OCI-LY7 (cell line): ENCODE measurements at regions of chr1 and their contacts with region 1.

Region 1: DNA sequence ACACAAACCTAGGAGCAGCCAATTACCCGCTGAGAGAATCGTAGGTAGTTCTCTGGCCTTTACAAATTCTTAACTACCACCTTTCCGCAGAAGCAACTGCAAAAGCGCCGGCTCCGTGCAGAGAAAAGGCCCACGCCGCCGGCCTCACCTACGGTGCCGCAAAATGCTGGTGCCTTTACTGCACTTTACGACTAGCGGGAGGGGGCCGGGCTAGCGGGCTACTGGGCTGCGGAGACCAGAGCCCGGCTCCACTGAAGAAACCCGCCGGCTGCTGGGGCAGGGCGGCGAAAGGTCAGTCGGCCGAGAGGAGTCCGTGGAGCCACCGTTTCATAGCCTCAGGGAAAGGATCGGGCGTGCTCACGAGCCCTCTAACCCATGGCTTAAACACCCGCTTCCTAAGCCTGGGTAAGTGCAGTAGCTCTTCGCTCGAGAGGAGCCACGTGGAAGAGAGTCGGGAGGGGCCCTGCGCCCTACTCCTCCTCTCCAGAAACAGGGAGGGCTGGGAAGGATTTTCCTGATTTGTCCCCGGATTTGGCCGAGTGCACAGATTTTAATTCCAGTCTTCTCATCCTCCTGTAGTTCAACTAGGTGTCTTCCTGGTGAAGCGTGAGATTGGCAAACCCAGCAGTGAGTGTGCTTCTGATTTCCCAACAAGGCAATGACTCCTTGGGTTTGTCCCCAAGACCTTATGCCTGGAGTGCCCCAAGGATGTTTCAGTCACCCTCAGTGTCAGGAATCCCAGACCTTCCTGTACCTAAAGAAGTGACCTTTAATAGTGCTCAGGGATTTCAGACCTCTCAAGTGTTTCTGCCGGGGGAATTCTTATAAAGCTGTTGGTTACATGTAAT is at the start of gene DPH5:
- DNase-seq: peak; percentile 92
- H3K4me3 ChIP-seq: peak within 1 kb of the TSS; percentile 78
- H3K27ac ChIP-seq: peak within 1 kb of the TSS; percentile 23
- H3K4me1 ChIP-seq: peaks cover 41% of the 10 kb centered on the region
- CTCF ChIP-seq: no peak
- total RNA-seq, gene DPH5: 19.4 and 20.3 TPM in 2 replicates

Region 2: DNA sequence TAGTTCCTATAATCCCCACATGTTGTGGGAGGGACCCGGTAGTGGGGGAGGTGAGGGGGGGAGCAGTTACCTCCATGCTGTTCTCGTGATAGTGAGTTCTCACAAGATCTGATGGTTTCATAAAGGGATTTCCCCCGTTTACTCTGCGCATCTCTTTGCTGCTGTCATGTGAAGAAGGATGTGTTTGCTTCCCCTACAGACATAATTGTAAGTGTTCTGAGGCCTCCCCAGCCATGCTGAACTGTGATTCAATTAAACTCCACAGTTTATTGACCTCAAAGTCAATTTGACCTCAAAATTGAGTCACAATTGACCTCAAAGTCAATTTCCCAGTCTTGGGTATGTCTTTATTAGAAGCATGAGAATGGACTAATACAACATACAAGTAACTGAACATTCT is 20.0 kb before region 1 on chr1:
- CTCF ChIA-PET with region 1: no interaction called
- POLR2A ChIA-PET with region 1: interaction called, 11 read pairs
- intact Hi-C with region 1: no loop called
- DNase-seq: no peak
- H3K4me3 ChIP-seq: no peak overlapping the region
- H3K27ac ChIP-seq: no peak overlapping the region
- H3K4me1 ChIP-seq: peaks cover 8% of the 10 kb centered on the region
- CTCF ChIP-seq: no peak

Region 3: GRCh38 chr1:101247404-101248287 is 221.8 kb after region 1 on chr1:
- CTCF ChIA-PET with region 1: no interaction called
- POLR2A ChIA-PET with region 1: interaction called, 5 read pairs
- intact Hi-C with region 1: loop called (anchors 5 kb)
- DNase-seq: peak; percentile 95
- H3K4me3 ChIP-seq: peak overlapping the region; percentile 36
- H3K27ac ChIP-seq: peak overlapping the region; percentile 85
- H3K4me1 ChIP-seq: peaks cover 63% of the 10 kb centered on the region
- CTCF ChIP-seq: no peak